MCF 10A (cell line): ENCODE measurements at regions of chr6 and their contacts with region 1.

Region 1: GRCh38 chr6:28355743-28356665 is 6.3 kb downstream of the ZKSCAN3 start:
- DNase-seq: peak; percentile 87
- H3K4me3 Mint-ChIP-seq: peak overlapping the region; percentile 83
- H3K27ac Mint-ChIP-seq: peak overlapping the region; percentile 79
- H3K4me1 Mint-ChIP-seq: peaks cover 12% of the 10 kb centered on the region
- H3K27me3 Mint-ChIP-seq: no peaks in the 10 kb centered on the region
- CTCF ChIP-seq: peak; percentile 60

Region 2: DNA sequence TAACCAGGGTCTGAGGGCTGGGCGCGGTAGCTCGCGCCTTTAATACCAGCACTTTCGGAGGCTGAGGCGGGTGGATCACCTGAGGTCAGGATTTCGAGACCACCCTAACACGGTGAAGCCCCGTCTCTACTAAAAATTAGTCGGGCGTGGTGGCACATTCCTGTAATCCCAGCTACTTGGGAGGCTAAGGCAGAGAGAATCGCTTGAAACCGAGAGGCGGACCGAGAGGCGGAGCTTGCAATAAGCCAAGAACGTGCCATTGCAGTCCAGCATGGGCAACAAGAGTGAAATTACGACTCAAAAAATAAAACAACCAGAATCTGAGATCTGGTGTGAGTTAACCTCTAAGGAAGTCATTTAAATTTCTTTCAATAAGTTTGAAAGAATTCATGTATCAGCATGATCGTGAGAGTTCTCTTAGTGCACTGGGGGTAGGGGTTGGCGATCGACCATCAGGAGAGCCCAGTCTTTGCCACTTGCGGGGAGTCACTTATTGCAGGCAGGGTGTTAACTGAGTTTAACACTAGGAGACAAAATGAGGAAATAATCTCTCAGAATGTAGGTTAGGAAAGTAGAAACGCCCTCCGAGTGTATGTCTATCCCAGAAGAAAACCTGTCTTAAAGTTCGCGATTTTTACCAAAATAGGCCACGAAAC is 676.6 kb before region 1 on chr6:
- CTCF ChIA-PET with region 1: no interaction called
- POLR2A ChIA-PET with region 1: no interaction called
- intact Hi-C with region 1: no loop called
- DNase-seq: no peak
- H3K4me3 Mint-ChIP-seq: no peak overlapping the region
- H3K27ac Mint-ChIP-seq: no peak overlapping the region
- H3K4me1 Mint-ChIP-seq: no peaks in the 10 kb centered on the region
- H3K27me3 Mint-ChIP-seq: no peaks in the 10 kb centered on the region
- CTCF ChIP-seq: no peak

Region 3: DNA sequence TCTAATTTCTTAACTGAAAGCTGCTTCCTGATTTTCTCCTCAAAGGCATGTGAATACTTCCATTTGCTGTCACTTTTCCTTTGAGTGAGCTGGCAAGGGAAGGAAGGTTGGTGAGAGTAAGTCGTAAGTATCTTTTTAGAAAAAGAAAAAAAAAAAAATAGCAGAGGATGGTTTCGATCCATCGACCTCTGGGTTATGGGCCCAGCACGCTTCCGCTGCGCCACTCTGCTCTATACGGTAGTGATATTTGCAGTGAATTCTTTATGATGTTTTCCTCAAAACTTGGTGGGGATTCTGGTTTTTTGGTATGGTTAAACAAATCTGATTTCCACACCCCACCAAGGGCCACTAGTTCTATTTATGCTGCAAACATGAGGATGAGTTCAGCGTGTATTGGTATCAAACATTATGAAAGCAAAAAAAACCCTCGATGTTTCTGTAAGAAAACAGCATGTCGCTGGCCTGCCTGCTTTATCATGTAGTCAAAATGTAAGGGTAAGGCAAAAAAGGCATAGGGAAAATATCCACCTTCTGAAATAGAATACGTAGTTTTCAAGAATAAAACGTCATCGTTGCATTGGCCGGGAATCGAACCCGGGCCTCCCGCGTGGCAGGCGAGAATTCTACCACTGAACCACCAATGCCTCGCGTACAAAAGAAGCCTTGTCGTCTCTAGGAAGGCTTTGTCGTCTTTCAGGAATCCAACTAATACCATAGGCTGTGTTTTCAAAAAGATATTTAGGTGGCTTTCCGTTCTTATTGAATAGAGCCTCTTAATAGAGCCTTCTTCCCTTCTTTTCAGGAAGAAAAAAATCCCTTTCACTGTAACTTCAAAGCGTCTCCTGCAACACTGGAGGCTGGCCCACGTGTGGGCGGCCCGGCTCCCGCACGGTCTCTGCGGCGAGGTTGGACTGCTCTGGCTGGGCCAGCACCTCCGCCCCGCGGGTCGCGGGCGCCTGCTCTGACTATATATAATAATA is 453.4 kb before region 1 on chr6:
- CTCF ChIA-PET with region 1: interaction called, 3 read pairs
- POLR2A ChIA-PET with region 1: no interaction called
- intact Hi-C with region 1: loop called (anchors 5 kb)
- DNase-seq: peak; percentile 89
- H3K4me3 Mint-ChIP-seq: peak overlapping the region; percentile 78
- H3K27ac Mint-ChIP-seq: peak overlapping the region; percentile 81
- H3K4me1 Mint-ChIP-seq: peaks cover 5% of the 10 kb centered on the region
- H3K27me3 Mint-ChIP-seq: no peaks in the 10 kb centered on the region
- CTCF ChIP-seq: no peak

Region 4: DNA sequence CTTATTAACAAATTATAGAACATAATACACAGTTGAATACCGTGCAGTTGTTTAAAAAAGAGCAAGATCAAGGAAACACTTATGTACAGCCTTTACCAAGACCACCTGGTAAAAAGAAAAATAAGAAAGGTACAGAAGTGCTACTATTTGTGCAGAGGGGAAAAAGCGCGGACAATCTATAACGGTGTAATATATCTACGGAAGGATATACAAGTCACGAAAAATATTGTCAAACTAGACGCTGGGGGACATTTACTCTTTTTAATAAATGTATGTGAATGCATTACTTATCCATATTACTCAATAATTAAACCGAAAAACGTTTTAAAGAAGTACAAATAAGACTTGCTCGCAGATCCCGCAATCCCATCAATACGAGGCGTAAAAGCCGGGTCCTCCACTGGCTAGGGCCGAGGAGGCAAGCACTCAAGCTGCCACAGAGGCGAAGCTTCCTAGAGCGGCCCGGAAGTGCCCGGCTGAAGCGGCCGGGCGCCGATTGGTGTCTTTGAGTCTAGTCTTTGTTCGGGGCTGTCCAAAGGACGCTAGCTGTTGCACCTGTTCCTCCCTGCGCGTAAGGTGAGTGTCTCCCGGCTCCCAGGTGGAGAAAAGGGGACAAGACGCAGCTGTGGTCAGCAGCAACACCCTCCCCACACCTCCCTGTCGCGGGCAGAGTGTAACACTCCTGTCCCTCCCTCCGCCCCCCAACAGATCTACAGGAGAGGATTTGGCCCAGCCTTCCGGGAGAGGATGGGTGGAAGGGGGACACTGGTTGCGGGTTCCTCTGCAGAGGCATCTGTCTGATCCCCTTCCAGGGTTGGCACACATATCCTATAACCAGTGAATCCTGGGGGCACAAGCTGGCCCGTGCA is 231.7 kb before region 1 on chr6 and contains the start of gene ZSCAN16:
- CTCF ChIA-PET with region 1: interaction called, 10 read pairs
- POLR2A ChIA-PET with region 1: interaction called, 13 read pairs
- intact Hi-C with region 1: no loop called
- DNase-seq: peak; percentile 85
- H3K4me3 Mint-ChIP-seq: peak within 1 kb of the TSS; percentile 84
- H3K27ac Mint-ChIP-seq: peak within 1 kb of the TSS; percentile 87
- H3K4me1 Mint-ChIP-seq: peaks cover 41% of the 10 kb centered on the region
- H3K27me3 Mint-ChIP-seq: no peaks in the 10 kb centered on the region
- CTCF ChIP-seq: no peak
- total RNA-seq, gene ZSCAN16: 2.6 and 4.4 TPM in 2 replicates

Region 5: GRCh38 chr6:28252009-28252975 is 103.7 kb before region 1 on chr6 and contains the start of gene ZKSCAN4:
- CTCF ChIA-PET with region 1: interaction called, 8 read pairs
- POLR2A ChIA-PET with region 1: interaction called, 22 read pairs
- intact Hi-C with region 1: no loop called
- DNase-seq: peak; percentile 91
- H3K4me3 Mint-ChIP-seq: peak within 1 kb of the TSS; percentile 93
- H3K27ac Mint-ChIP-seq: peak within 1 kb of the TSS; percentile 83
- H3K4me1 Mint-ChIP-seq: peaks cover 7% of the 10 kb centered on the region
- H3K27me3 Mint-ChIP-seq: no peaks in the 10 kb centered on the region
- CTCF ChIP-seq: no peak
- total RNA-seq, gene ZKSCAN4: 3.3 and 4.8 TPM in 2 replicates

Region 6: DNA sequence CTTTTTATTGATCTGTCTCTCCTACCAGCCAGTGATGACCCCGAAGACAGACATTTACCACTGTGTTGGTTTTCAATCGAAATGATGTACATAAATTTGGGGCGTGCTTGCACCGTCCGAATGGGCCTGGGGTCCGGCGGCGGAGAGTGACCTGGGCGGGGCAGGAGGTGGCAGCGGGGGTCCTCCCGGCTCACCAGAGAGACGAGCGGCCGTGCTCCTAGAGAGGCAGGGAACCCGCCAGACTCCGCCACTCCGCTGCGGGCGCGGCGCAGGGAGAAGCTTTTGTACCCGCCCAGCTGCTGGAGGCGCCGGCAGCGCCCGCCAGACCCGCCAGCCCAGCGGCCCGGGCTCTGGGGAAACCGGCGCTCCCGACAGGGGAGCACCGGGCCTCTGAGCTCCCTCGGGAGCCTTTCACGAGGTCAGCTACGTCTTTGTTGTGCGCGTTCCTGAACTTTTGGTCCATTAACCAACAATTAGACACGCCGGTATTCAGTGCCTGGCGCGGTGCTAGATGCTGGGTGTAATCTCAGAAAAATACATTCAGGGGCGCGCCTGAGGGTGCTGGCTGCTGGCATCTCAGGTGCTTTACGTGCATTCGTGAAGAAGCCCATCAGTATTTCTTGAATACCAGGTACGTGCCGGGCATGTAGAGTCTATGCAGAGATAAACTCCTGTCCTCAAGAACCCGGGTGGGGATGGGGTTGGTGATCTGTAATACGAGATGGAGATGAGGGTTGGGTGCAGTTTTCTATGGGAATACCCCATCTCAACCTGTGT is 74.5 kb before region 1 on chr6 and contains the start of gene PGBD1:
- CTCF ChIA-PET with region 1: interaction called, 15 read pairs
- POLR2A ChIA-PET with region 1: interaction called, 14 read pairs
- intact Hi-C with region 1: no loop called
- DNase-seq: peak; percentile 65
- H3K4me3 Mint-ChIP-seq: peak within 1 kb of the TSS; percentile 80
- H3K27ac Mint-ChIP-seq: no peak within 1 kb of the TSS
- H3K4me1 Mint-ChIP-seq: peaks cover 9% of the 10 kb centered on the region
- H3K27me3 Mint-ChIP-seq: no peaks in the 10 kb centered on the region
- CTCF ChIP-seq: no peak
- total RNA-seq, gene PGBD1: 2.5 and 2.9 TPM in 2 replicates

Region 7: DNA sequence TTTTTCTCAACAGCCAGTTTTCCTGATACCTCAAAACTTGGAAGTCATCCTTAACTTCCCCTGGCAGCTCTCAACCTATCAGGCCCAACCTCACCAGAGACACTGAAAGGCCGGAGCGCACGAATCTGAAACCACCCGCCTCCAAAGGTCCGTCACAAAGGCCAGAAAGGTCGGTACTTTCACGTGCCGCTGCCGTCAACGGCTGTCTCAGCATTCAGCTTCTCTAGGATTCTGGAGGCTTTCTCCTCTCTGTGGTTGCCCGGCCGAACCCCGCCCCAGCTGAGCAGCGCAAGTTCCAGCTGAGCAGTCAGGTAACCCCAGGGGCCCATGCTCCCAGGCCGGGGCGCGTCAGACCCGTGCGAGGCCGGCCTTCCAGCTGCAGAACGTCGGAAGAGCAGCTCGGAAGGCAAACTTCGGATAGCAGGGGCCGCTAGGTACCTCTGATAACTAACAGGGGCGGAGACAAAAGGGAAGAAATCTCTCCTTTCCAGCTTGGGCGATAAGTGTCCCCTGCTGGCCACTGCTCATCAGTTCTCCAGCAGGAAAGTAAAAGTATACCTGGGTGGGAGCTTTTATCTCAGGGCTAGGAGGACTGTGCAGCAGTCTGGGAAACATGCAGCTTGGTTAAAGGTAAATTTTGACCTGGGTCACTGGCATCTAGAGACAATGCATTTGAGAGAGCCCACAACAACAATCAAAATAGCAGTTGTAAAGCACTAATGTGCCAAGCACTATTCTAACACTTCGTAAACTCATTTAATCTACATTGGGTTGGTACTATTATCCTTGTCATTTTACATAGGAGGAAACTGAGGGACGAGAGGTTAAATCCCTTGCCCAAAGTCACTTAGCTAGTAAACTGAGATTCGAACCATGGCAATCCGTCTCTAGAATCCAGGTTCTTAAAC is 27.5 kb after region 1 on chr6:
- CTCF ChIA-PET with region 1: interaction called, 35 read pairs
- POLR2A ChIA-PET with region 1: interaction called, 48 read pairs
- intact Hi-C with region 1: no loop called
- DNase-seq: peak; percentile 80
- H3K4me3 Mint-ChIP-seq: peak overlapping the region; percentile 82
- H3K27ac Mint-ChIP-seq: peak overlapping the region; percentile 96
- H3K4me1 Mint-ChIP-seq: peaks cover 14% of the 10 kb centered on the region
- H3K27me3 Mint-ChIP-seq: no peaks in the 10 kb centered on the region
- CTCF ChIP-seq: peak; percentile 48

Region 8: GRCh38 chr6:28782113-28782673 is 426.2 kb after region 1 on chr6:
- CTCF ChIA-PET with region 1: no interaction called
- POLR2A ChIA-PET with region 1: no interaction called
- intact Hi-C with region 1: no loop called
- DNase-seq: no peak
- H3K4me3 Mint-ChIP-seq: no peak overlapping the region
- H3K27ac Mint-ChIP-seq: no peak overlapping the region
- H3K4me1 Mint-ChIP-seq: peaks cover 12% of the 10 kb centered on the region
- H3K27me3 Mint-ChIP-seq: peaks cover 51% of the 10 kb centered on the region
- CTCF ChIP-seq: no peak